Cardiac septum (tissue), 1 donor: ENCODE measurements at regions of chr3 and their contacts with region 1.

Region 1: GRCh38 chr3:185983495-185984141 is 45.8 kb upstream of the TRA2B start:
- DNase-seq: peak; percentile 84

Region 2: GRCh38 chr3:186241910-186242821 is 258.5 kb after region 1 on chr3:
- intact Hi-C with region 1: loop called (anchors 1 kb)
- DNase-seq: peak; percentile 84

Region 3: DNA sequence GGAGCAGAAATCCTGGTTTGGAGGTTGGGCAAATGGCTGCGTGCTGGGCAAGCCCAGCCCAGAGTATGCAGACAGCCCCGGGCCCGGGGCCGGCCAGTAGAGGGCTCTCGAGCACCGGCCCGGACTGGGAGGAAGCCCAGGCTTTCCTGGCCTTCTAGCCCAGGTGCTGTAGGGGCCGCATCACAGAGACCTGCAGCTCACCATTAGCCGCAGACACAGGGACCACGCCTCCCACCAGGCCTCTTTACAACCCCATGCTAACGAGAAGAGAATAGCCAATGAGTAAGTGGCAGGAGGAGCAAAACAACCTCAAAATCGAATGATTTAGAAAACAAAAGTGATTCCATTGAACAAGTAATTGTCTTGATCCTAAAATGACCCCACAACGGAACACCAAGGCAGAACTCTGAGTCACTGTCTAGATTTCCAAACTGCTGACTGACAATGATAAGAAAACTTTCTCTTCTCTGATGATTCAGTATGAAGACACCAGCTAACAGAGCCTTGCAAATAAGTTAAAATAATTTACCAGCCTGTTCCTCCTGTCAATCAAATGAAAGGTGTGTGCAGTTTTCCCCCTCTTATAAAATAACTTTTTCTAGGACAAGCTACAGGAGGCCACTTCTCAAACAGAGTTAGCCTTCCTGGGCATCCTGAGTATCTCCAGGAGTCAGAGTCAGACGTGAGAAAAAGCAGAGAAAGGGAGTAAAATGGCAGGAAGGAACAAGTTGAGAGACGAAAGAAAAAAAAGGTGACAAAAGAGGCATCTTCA is 276.2 kb after region 1 on chr3:
- intact Hi-C with region 1: loop called (anchors 5 kb)
- DNase-seq: peak; percentile 77

Region 4: GRCh38 chr3:186540221-186540834 is 556.7 kb after region 1 on chr3:
- intact Hi-C with region 1: loop called (anchors 2 kb)
- DNase-seq: no peak